Caco-2 (cell line): ENCODE measurements at regions of chr11 and their contacts with region 1.

Region 1: DNA sequence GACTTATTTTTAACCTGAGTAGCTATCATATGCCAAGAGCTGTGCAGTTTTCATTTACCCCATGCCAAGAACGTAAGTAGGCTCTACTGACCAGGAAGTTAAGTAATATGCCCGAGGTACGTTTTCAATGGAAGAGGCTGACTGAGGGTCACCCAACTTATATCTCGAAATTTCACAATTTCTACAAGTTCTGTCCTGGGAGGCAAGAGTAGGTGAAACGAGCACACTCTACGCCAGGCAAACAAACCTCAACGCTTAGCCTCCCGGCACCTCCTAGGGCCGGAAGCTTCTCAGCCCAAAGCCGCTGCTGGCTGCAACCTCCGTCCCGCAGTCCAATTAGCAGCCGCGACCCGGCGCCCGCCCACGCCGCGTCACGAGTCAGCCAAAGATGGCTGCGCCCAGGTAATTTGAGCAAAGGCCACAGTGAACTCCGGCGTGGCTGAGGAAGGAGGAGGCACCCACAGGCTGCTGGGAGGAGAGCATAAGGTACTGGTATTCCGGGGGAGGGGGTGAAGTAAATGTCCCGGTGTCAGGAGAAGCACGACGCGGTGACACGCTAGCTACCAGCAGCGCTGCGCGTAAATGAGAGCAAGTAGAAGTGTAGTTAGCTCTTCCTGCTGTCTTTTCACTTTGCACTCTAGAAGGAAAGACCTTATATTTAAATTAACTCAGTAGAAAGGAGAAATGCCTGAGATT is at the start of gene TMEM126A:
- DNase-seq: peak; percentile 99
- H3K4me3 ChIP-seq: peak within 1 kb of the TSS; percentile 49
- H3K4me3 Mint-ChIP-seq: peak within 1 kb of the TSS; percentile 81
- H3K27ac Mint-ChIP-seq: peak within 1 kb of the TSS; percentile 87
- H3K4me1 ChIP-seq: peaks cover 22% of the 10 kb centered on the region
- H3K4me1 Mint-ChIP-seq: peaks cover 36% of the 10 kb centered on the region
- H3K27me3 ChIP-seq: no peaks in the 10 kb centered on the region
- H3K27me3 Mint-ChIP-seq: no peaks in the 10 kb centered on the region
- CTCF ChIP-seq: no peak
- total RNA-seq, gene TMEM126A: 35.5 and 37.7 TPM in 2 replicates

Region 2: DNA sequence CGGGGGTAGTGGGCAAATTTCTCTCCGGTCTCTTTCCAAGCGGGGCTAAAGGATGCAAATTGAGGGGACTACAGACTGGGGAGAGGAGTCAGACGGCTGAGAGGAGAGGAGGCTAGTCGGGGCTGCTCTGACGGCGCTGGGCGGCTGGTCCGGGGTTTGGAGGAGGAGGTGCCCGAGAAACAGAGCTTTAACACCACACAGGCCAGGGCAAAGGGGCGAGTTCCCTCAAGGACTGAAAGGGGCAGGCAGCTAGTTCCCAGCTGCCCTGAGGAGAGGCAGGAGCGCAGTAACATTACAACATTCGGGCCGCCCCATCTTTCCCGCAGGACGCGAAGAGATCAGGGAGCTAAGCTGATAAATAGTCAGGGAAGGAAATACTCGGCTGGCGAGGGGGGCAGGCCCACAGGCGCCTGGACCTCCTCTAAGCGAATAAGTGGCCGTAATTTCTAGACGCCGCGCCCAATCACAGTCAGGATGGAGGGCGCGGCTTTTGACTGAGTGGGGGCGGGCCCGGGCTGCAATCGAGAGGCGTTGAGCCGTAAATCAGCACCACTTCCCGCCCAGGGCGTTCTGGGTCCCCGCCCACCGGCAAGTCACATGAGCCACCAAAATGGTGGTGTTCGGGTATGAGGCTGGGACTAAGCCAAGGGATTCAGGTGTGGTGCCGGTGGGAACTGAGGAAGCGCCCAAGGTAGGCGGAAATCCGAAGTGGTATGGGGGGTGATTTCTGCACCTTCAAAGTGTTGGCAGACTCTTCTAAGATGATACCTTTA is 19.6 kb before region 1 on chr11 and contains the start of gene TMEM126B:
- CTCF ChIA-PET with region 1: interaction called, 11 read pairs
- POLR2A ChIA-PET with region 1: interaction called, 38 read pairs
- intact Hi-C with region 1: loop called (anchors 1 kb)
- DNase-seq: peak; percentile 99 to 100
- H3K4me3 ChIP-seq: peak within 1 kb of the TSS; percentile 58
- H3K4me3 Mint-ChIP-seq: peak within 1 kb of the TSS; percentile 98
- H3K27ac Mint-ChIP-seq: peak within 1 kb of the TSS; percentile 96
- H3K4me1 ChIP-seq: peaks cover 8% of the 10 kb centered on the region; the same call in 1 of the 2 replicates
- H3K4me1 Mint-ChIP-seq: peaks cover 13% of the 10 kb centered on the region
- H3K27me3 ChIP-seq: no peaks in the 10 kb centered on the region
- H3K27me3 Mint-ChIP-seq: no peaks in the 10 kb centered on the region
- CTCF ChIP-seq: no peak
- total RNA-seq, gene TMEM126B: 141 and 144 TPM in 2 replicates

Region 3: GRCh38 chr11:85634747-85635146 is 13.0 kb before region 1 on chr11:
- CTCF ChIA-PET with region 1: interaction called, 3 read pairs
- POLR2A ChIA-PET with region 1: interaction called, 18 read pairs
- intact Hi-C with region 1: loop called (anchors 1 kb)
- DNase-seq: peak; percentile 52 to 55
- H3K4me3 ChIP-seq: no peak overlapping the region
- H3K4me3 Mint-ChIP-seq: no peak overlapping the region
- H3K27ac Mint-ChIP-seq: no peak overlapping the region
- H3K4me1 ChIP-seq: peaks cover 38% of the 10 kb centered on the region
- H3K4me1 Mint-ChIP-seq: peaks cover 13% of the 10 kb centered on the region
- H3K27me3 ChIP-seq: no peaks in the 10 kb centered on the region
- H3K27me3 Mint-ChIP-seq: no peaks in the 10 kb centered on the region
- CTCF ChIP-seq: no peak

Region 4: DNA sequence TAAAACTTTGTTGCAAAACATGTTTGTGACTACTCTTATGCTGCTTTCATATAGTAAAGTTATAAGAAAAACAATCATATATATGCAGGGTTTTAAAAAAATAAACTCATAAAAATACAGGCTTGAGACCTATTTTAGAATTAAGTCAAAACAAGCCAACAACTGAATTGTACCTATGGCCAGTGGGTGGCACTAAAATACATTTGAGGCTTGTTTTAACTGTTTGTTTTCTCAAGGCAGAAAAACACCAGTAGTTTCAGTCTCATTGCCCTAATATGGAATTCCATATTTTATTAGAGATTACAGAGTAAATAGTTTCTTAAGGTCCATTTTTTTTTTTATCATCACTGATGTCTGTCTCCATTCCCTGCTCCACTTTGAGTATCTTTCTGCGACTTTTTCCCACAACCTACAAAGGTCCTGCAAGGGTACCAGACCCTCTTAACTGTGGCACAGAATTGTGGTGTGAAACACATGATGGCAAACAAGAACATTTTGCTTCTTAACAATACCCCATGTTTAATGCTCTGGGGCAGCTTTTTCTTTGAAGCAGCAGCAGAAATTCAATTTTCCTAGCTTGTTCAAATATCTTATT is 46.7 kb after region 1 on chr11:
- CTCF ChIA-PET with region 1: no interaction called
- POLR2A ChIA-PET with region 1: no interaction called
- intact Hi-C with region 1: no loop called
- DNase-seq: peak in 1 of 2 experiments; percentile 59
- H3K4me3 ChIP-seq: no peak overlapping the region
- H3K4me3 Mint-ChIP-seq: no peak overlapping the region
- H3K27ac Mint-ChIP-seq: no peak overlapping the region
- H3K4me1 ChIP-seq: no peaks in the 10 kb centered on the region
- H3K4me1 Mint-ChIP-seq: no peaks in the 10 kb centered on the region
- H3K27me3 ChIP-seq: no peaks in the 10 kb centered on the region
- H3K27me3 Mint-ChIP-seq: no peaks in the 10 kb centered on the region
- CTCF ChIP-seq: peak; percentile 79 to 85